ENCODE measurements at regions of chr2 and their contacts with region 1.

Region 1: GRCh38 chr2:156309917-156310316 is 22.6 kb downstream of the NR4A2 start:
- DNase-seq: no peak
- ATAC-seq: no peak
- H3K4me3 ChIP-seq: no peak overlapping the region
- H3K4me3 Mint-ChIP-seq: no peak overlapping the region
- H3K27ac ChIP-seq: no peak overlapping the region
- H3K27ac Mint-ChIP-seq: no peak overlapping the region
- H3K4me1 ChIP-seq: no peaks in the 10 kb centered on the region
- H3K4me1 Mint-ChIP-seq: no peaks in the 10 kb centered on the region
- H3K27me3 ChIP-seq: peaks cover 2 to 5% of the 10 kb centered on the region in 2 experiments
- H3K27me3 Mint-ChIP-seq: peaks cover 42 to 54% of the 10 kb centered on the region in 2 donors

Region 2: GRCh38 chr2:155766342-155767115 is 543.4 kb before region 1 on chr2:
- CTCF ChIA-PET with region 1: no interaction called
- POLR2A ChIA-PET with region 1: no interaction called
- DNase-seq: no peak
- ATAC-seq: no peak
- H3K4me3 ChIP-seq: no peak overlapping the region
- H3K4me3 Mint-ChIP-seq: no peak overlapping the region
- H3K27ac ChIP-seq: no peak overlapping the region
- H3K27ac Mint-ChIP-seq: no peak overlapping the region
- H3K4me1 ChIP-seq: no peaks in the 10 kb centered on the region
- H3K4me1 Mint-ChIP-seq: no peaks in the 10 kb centered on the region
- H3K27me3 ChIP-seq: no peaks in the 10 kb centered on the region
- H3K27me3 Mint-ChIP-seq: no peaks in the 10 kb centered on the region

Region 3: GRCh38 chr2:155972916-155973315 is 337.0 kb before region 1 on chr2:
- CTCF ChIA-PET with region 1: interaction called in 1 of 2 experiments, 10 read pairs
- POLR2A ChIA-PET with region 1: no interaction called
- DNase-seq: no peak
- ATAC-seq: no peak
- H3K4me3 ChIP-seq: no peak overlapping the region
- H3K4me3 Mint-ChIP-seq: no peak overlapping the region
- H3K27ac ChIP-seq: no peak overlapping the region
- H3K27ac Mint-ChIP-seq: no peak overlapping the region
- H3K4me1 ChIP-seq: no peaks in the 10 kb centered on the region
- H3K4me1 Mint-ChIP-seq: no peaks in the 10 kb centered on the region
- H3K27me3 ChIP-seq: no peaks in the 10 kb centered on the region
- H3K27me3 Mint-ChIP-seq: peaks cover 0 to 5% of the 10 kb centered on the region in 2 donors